HCT116 (cell line): ENCODE measurements at regions of chr6 and their contacts with region 1.

Region 1: GRCh38 chr6:128807577-128807976 is 75.4 kb upstream of the LAMA2 start:
- DNase-seq: peak; percentile 34
- ATAC-seq: peak; percentile 66
- H3K4me3 ChIP-seq: no peak overlapping the region
- H3K27ac ChIP-seq: no peak overlapping the region
- H3K4me1 ChIP-seq: no peaks in the 10 kb centered on the region
- H3K27me3 ChIP-seq: no peaks in the 10 kb centered on the region
- CTCF ChIP-seq: peak; percentile 34 to 58 (median 42); a peak in 5 of 6 replicates
- POLR2A ChIP-seq: no peak
- RAD21 ChIP-seq: peak; percentile 67

Region 2: DNA sequence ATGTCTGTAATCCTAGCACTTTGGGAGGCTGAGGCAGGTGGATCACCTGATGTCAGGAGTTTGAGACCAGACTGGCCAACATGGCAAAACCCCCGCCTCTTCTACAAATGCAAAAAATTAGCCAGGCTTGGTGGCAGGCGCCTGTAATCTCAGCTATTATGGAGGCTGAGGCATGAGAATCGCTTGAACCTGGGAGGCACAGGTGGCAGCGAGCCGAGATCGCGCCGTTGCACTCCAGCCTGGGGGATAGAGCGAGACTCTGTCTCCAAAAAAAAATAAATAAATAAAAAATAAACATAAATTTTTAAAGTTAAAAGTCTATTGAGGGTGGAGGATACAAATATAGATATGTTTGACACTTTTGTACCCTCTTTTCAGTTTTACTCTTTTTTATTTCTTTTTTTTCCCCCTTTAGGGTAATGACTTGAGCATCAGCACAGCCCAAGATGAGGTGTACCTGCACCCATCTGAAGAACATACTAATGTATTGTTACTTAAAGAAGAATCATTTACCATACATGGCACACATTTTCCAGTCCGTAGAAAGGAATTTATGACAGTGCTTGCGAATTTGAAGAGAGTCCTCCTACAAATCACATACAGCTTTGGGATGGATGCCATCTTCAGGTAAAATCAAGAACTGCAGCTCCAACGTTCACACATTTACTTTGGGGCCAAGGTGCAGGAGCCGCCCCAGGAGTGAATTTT is 444.2 kb after region 1 on chr6:
- CTCF ChIA-PET with region 1: interaction called, 9 read pairs
- POLR2A ChIA-PET with region 1: no interaction called
- RAD21 ChIA-PET with region 1: interaction called in 1 of 2 experiments, 5 read pairs
- intact Hi-C with region 1: loop called (anchors 5 kb)
- DNase-seq: peak; percentile 73
- ATAC-seq: peak; percentile 93
- H3K4me3 ChIP-seq: no peak overlapping the region
- H3K27ac ChIP-seq: no peak overlapping the region
- H3K4me1 ChIP-seq: peaks cover 3 to 10% of the 10 kb centered on the region in 2 experiments; a peak in 3 of 4 replicates
- H3K27me3 ChIP-seq: no peaks in the 10 kb centered on the region
- CTCF ChIP-seq: peak; percentile 64 to 87 (median 75); a peak in 5 of 6 replicates
- POLR2A ChIP-seq: no peak
- RAD21 ChIP-seq: peak; percentile 90

Region 3: DNA sequence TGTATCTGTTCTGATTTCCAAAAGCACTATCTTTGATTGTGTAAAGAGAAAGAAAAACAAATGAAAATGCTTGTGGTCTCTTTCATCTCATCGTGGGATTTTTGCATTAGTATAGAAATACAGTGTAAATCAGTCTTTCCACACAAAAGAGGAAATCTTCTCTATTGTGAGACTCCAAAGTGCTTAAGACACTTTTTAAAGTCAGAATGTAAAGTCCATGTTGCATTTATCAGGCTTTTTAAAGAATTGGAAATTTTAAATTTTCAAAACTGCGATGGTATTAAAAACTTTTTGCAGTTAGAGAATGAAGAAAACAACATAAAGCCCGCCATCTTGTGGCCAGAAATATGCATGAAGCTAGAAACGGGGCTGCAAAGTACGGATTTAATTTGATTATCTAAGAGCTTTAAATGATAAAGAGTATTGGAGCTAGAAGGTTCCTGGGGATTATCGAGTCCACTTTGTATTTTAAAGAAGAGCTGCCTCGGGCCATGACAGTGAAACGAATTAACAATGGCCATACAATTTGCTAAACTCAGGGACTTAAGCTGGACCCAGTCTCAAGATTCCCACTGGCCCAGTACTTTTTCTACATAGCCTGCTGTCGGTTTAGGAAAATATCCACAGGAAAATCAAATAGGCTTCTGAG is 562.8 kb after region 1 on chr6:
- CTCF ChIA-PET with region 1: interaction called, 15 read pairs
- POLR2A ChIA-PET with region 1: no interaction called
- RAD21 ChIA-PET with region 1: interaction called in 1 of 2 experiments, 3 read pairs
- intact Hi-C with region 1: loop called (anchors 1 kb)
- DNase-seq: peak; percentile 45
- ATAC-seq: peak; percentile 78
- H3K4me3 ChIP-seq: peak overlapping the region in 1 of 2 experiments; percentile 36; a peak in 2 of 4 replicates
- H3K27ac ChIP-seq: no peak overlapping the region
- H3K4me1 ChIP-seq: peaks cover 6 to 10% of the 10 kb centered on the region in 2 experiments; a peak in 2 of 4 replicates
- H3K27me3 ChIP-seq: no peaks in the 10 kb centered on the region
- CTCF ChIP-seq: peak; percentile 60 to 85 (median 63); a peak in 5 of 6 replicates
- POLR2A ChIP-seq: no peak
- RAD21 ChIP-seq: peak; percentile 82

Region 4: GRCh38 chr6:129575378-129576118 is 768.0 kb after region 1 on chr6:
- CTCF ChIA-PET with region 1: no interaction called
- POLR2A ChIA-PET with region 1: no interaction called
- RAD21 ChIA-PET with region 1: no interaction called
- intact Hi-C with region 1: loop called (anchors 10 kb)
- DNase-seq: peak; percentile 27
- ATAC-seq: peak; percentile 89
- H3K4me3 ChIP-seq: no peak overlapping the region
- H3K27ac ChIP-seq: peak overlapping the region; percentile 40
- H3K4me1 ChIP-seq: peaks cover 12 to 13% of the 10 kb centered on the region in 2 experiments; a peak in 3 of 4 replicates
- H3K27me3 ChIP-seq: no peaks in the 10 kb centered on the region
- CTCF ChIP-seq: peak; percentile 55 to 80 (median 68); a peak in 5 of 6 replicates
- POLR2A ChIP-seq: no peak
- RAD21 ChIP-seq: peak; percentile 85